A549 (cell line): ENCODE measurements at regions of chr10 and their contacts with region 1.

Region 1: DNA sequence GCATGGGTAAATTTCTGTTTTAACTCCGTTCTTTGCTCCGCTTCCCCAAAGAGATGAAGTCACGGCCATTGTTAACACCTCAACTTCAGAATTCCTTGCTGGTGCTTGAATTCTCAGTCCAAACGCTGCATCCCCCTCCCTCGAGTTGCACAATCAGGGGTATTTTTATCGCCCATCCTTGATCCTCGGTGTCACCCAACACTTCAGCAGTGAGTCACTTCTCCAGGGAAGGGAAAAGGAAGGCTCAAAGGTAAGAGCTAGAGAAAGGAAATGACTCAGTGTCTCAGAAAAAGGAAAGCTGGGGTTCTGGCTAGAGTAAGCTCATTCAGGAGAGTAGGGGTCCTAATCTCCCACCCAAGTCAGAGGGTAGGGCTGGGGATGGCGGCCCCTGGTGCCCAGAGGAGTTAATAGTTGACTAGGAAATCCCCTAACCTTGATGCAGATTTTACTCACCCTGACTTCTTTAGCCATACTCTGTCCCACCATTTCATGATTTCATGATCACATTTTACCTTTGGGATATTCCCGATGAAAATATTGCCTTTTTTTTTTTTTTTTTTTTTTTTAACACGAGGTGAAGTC is 39.8 kb upstream of the TRIM8 start:
- DNase-seq: peak; percentile 76 to 86
- ATAC-seq: peak; percentile 85 to 89
- H3K4me3 ChIP-seq: peak overlapping the region; percentile 9; the same call in 1 of the 3 replicates
- H3K27ac ChIP-seq: peak overlapping the region; percentile 70 to 89
- H3K4me1 ChIP-seq: peaks cover 29% of the 10 kb centered on the region
- CTCF ChIP-seq: no peak
- EP300 ChIP-seq: peak in 1 of 2 experiments; percentile 38; a peak in 1 of 5 replicates
- POLR2A ChIP-seq: no peak
- RAD21 ChIP-seq: no peak

Region 2: GRCh38 chr10:102615361-102615760 is 10.9 kb after region 1 on chr10:
- CTCF ChIA-PET with region 1: interaction called, 11 read pairs
- POLR2A ChIA-PET with region 1: no interaction called
- DNase-seq: peak in 1 of 2 experiments; percentile 20
- ATAC-seq: peak; percentile 39 to 84; a peak in 3 of 6 replicates
- H3K4me3 ChIP-seq: no peak overlapping the region
- H3K27ac ChIP-seq: no peak overlapping the region
- H3K4me1 ChIP-seq: peaks cover 5% of the 10 kb centered on the region
- CTCF ChIP-seq: no peak; the same call in 2 of the 3 replicates
- EP300 ChIP-seq: no peak
- POLR2A ChIP-seq: no peak
- RAD21 ChIP-seq: no peak

Region 3: DNA sequence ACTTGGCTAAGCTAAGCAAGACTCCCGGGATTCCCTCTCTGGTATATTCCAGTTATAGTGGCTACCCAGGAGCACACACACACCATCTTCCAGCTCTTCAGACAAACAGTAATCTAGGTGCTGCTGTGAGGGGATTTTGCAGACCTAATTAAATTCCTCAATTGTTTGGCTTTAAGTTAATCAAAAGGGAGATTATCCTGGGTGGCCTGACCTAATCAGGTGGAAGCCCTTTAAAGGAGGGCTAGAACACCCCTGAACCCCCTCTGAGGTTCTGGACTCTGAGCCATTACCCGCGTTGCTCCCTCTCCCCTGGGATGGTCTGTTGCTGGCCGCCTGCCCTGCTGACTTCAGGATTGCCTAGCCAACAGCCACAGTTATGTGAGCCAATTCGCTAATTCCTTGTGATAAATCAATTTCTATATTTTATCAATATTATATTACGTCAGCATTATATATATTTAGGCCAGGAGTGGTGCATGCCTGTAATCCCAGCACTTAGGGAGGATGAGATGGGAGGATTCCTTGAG is 116.4 kb after region 1 on chr10:
- CTCF ChIA-PET with region 1: no interaction called
- POLR2A ChIA-PET with region 1: no interaction called
- DNase-seq: no peak
- ATAC-seq: no peak
- H3K4me3 ChIP-seq: no peak overlapping the region
- H3K27ac ChIP-seq: peak overlapping the region in 1 of 2 experiments; percentile 26; a peak in 3 of 6 replicates
- H3K4me1 ChIP-seq: no peaks in the 10 kb centered on the region; the same call in 2 of the 3 replicates
- CTCF ChIP-seq: no peak
- EP300 ChIP-seq: no peak
- POLR2A ChIP-seq: no peak
- RAD21 ChIP-seq: no peak

Region 4: DNA sequence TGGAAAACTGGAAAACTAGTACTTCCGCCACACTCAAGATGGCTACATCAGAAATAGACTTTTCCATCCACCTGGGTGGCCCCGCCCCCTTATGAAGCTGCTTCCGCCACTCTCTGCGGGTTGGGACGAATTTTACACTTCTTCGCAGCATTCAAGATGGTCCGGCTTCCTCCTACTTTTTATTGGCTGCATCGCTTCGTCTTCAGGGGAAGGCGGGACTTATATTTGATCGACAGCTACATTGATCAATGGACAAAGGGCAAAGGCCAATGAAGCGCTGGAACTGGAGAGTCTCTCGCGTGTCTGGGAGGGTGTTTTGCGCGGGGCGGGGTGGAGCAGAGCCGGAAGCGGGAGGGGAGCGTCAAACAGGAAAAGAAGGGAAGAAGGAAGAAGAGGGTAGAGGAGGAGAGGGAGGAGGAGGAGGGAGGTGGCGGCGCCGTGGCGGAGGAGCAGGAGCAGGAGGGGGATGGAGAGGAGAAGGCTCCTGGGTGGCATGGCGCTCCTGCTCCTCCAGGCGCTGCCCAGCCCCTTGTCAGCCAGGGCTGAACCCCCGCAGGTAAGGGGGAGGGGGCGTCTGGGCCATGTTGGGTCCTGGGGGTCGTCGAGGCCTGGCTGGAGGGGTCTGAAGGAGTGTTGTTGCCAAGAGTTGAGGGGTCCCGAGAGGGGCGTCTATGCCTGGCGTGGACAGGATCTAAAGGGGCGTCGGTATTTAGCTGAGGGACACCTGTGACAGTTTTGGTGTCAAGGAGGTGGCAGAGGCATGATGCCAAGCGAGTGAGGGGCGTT is 139.3 kb after region 1 on chr10 and contains the start of gene WBP1L:
- CTCF ChIA-PET with region 1: no interaction called
- POLR2A ChIA-PET with region 1: no interaction called
- DNase-seq: peak; percentile 98 to 99
- ATAC-seq: peak; percentile 96 to 98
- H3K4me3 ChIP-seq: peak within 1 kb of the TSS; percentile 92
- H3K27ac ChIP-seq: peak within 1 kb of the TSS; percentile 91 to 94
- H3K4me1 ChIP-seq: peaks cover 12% of the 10 kb centered on the region; the same call in 1 of the 3 replicates
- CTCF ChIP-seq: no peak
- EP300 ChIP-seq: no peak
- POLR2A ChIP-seq: peak; percentile 88
- RAD21 ChIP-seq: no peak
- polyA plus RNA-seq, gene WBP1L: 23.5 and 25.1 TPM in 2 replicates

Region 5: DNA sequence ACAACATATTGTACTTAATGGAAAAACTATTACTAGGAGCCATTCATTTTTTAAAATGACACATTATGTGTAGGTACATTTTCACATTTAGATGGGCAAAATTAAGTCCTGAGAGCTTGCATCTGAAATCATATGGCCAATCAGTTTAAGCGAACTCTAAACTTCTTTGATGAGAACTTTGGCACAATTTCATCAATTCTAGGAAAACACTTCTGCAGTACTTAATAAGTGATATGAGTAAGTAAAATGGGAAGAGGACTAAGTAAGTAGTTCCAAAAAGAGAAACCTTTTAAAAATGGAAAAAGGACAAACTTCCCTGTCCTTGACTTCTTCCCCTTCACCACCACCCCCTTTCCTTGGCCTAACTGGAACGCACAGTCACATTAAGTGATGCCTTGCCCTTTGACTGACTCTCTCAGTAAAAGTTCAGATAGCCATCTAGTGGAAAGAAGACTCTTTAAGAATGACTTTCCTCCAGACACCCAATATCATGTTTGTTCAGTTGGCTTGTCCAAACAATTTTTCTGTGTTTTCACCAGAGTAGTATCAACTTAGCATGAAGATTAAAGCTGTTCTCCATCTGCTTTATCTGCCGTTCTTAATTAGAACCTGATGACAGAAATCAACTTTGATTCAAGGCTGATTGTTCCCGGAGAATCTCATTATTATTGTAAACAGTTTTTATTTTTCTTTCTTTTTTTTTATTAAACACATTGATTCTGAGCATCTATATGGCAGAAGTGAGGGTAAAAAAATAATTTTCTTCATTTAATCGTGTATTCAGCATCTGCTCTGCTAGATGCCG is 358.7 kb after region 1 on chr10:
- CTCF ChIA-PET with region 1: no interaction called
- POLR2A ChIA-PET with region 1: no interaction called
- DNase-seq: peak; percentile 13 to 63
- ATAC-seq: peak; percentile 85 to 90; a peak in 5 of 6 replicates
- H3K4me3 ChIP-seq: no peak overlapping the region
- H3K27ac ChIP-seq: peak overlapping the region; percentile 50 to 57; a peak in 5 of 6 replicates
- H3K4me1 ChIP-seq: peaks cover 49% of the 10 kb centered on the region
- CTCF ChIP-seq: no peak; the same call in 2 of the 3 replicates
- EP300 ChIP-seq: no peak
- POLR2A ChIP-seq: no peak
- RAD21 ChIP-seq: peak; percentile 33 to 41; a peak in 3 of 5 replicates